HCT116 (cell line): ENCODE measurements at regions of chrX and their contacts with region 1.

Region 1: DNA sequence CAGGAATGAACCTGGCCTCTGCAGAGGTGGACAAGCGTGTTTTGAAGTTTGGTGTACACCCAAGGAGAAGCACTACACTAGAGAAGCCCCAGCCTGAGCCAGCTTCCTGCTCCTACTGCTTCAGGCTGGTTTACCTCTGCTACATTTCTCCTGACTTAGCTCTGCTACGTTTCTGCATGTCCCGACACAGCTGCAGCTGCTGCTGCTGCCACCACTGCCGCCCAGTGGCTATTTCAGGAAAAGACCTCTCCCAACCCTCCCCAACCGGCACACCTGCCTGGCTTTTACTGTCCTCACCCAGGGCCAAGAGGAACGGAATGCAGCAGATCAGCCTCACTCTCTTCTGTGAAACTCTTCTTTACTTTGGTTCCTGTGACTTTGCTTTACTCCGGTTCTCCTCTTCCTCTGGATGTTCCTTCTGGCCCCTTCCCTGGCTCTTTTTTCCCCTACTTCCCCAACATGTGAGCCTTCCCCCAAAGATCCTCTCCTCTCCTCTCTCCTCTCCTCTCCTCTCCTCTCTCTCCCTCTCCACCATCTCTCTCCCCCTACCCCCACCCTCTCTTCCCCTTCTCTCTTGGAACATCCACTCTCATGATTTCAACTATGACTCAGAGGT is 3.1 kb upstream of the P2RY4 start:
- DNase-seq: no peak
- ATAC-seq: peak; percentile 97
- H3K4me3 ChIP-seq: no peak overlapping the region
- H3K27ac ChIP-seq: no peak overlapping the region
- H3K4me1 ChIP-seq: peaks cover 0 to 3% of the 10 kb centered on the region in 2 experiments; a peak in 1 of 4 replicates
- H3K27me3 ChIP-seq: no peaks in the 10 kb centered on the region
- CTCF ChIP-seq: peak; percentile 60 to 66 (median 66); a peak in 5 of 6 replicates
- POLR2A ChIP-seq: no peak
- RAD21 ChIP-seq: peak; percentile 79

Region 2: GRCh38 chrX:70196961-70197805 is 65.9 kb before region 1 on chrX:
- CTCF ChIA-PET with region 1: interaction called, 4 read pairs
- POLR2A ChIA-PET with region 1: no interaction called
- RAD21 ChIA-PET with region 1: no interaction called
- intact Hi-C with region 1: loop called (anchors 5 kb)
- DNase-seq: peak; percentile 60
- ATAC-seq: peak; percentile 97
- H3K4me3 ChIP-seq: 0 out of 4 replicates have a peak overlapping the region, but pooled peaks of 1 of the 2 experiments have one; percentile 13
- H3K27ac ChIP-seq: no peak overlapping the region
- H3K4me1 ChIP-seq: peaks cover 0 to 5% of the 10 kb centered on the region in 2 experiments; a peak in 1 of 4 replicates
- H3K27me3 ChIP-seq: no peaks in the 10 kb centered on the region
- CTCF ChIP-seq: peak; percentile 60 to 80 (median 67)
- POLR2A ChIP-seq: no peak
- RAD21 ChIP-seq: peak; percentile 81